ENCODE measurements at regions of chr19 and their contacts with region 1.

Region 1: GRCh38 chr19:53520550-53521372 is 17.2 kb upstream of the ZNF331 start:
- H3K4me3 Mint-ChIP-seq: peak overlapping the region; percentile 84
- H3K27ac Mint-ChIP-seq: peak overlapping the region; percentile 86
- H3K4me1 Mint-ChIP-seq: peaks cover 12% of the 10 kb centered on the region
- H3K27me3 Mint-ChIP-seq: no peaks in the 10 kb centered on the region

Region 2: DNA sequence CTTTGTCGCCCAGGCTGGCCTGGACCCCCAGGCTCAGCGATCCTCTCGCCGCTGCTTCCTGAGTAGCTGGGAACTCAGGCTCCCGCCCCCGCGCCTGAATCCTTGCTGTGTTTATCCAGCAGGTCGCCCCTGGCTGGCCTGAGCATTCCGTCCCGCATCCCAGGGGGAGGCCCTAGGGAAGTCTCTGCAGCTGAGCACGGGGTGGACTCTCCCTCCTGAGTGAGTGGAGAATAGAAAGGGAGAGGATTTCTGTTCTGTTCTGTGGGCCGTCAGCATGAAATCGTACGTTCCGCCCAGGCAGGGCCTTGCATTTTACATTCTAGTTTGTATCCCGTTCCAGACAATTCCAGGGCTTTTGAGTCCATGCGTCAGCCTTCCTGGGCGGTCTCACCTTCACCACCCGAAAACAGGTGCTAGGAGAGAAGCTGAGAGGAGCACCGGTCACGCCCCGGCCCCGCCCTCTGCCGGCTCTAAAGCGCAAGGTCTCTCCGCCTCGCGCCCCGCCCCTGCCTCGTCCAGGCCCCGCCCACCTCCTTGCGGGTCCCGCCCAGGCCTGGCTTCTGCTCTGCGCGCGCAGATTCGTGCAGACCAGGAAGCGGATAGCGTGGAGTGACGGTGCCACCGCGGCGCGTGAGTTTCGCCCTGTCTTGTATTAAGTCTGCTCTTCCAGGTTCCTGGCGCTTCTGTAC is 89.2 kb before region 1 on chr19 and contains the start of gene ZNF761:
- intact Hi-C with region 1: loop called (anchors 5 kb)
- H3K4me3 Mint-ChIP-seq: peak within 1 kb of the TSS; percentile 90
- H3K27ac Mint-ChIP-seq: peak within 1 kb of the TSS; percentile 96
- H3K4me1 Mint-ChIP-seq: peaks cover 16% of the 10 kb centered on the region
- H3K27me3 Mint-ChIP-seq: peaks cover 5% of the 10 kb centered on the region

Region 3: GRCh38 chr19:53537480-53538383 is 17.0 kb after region 1 on chr19 and contains the start of gene ZNF331:
- intact Hi-C with region 1: no loop called
- H3K4me3 Mint-ChIP-seq: peak within 1 kb of the TSS; percentile 92
- H3K27ac Mint-ChIP-seq: peak within 1 kb of the TSS; percentile 92
- H3K4me1 Mint-ChIP-seq: no peaks in the 10 kb centered on the region
- H3K27me3 Mint-ChIP-seq: no peaks in the 10 kb centered on the region

Measured in dendritic cell treated with granulocyte-macrophage colony-stimulating factor and Interleukin-4, amounts not matched to agents 40 ng/mL and 50 ng/mL, for 4 days (primary cell).